ENCODE measurements at regions of chr4 and their contacts with region 1.

Region 1: DNA sequence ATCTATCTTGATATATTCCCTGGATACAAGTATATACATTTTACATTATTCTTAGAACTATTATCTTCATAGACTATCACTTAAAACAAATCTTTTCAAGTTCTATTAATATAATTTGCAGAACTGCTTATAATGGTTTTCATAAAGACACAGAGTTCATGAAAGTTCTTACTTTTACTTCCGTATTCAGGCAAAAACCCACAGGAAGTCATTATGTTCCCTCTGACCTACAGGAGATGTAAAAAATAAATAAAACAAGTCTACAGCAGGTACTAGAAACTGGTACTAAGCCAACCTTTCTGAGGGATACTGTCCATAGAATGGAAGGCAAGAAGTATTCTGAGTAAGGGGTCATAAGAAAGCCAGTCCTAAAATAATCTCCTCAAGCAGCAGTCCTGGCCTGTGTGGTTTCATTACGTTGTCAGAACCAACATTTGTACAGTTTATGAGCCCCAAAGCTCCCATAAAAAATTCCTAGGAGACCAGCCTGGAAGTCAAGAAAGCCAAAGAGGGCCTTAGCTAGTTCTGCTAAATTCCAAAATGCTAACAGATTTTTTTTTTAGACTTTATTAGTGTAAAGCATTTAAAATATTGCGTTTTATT is 68.6 kb downstream of the CAMK2D start:
- DNase-seq: no peak
- ATAC-seq: peak; percentile 85
- H3K4me3 Mint-ChIP-seq: peak overlapping the region; percentile 56
- H3K27ac Mint-ChIP-seq: peak overlapping the region; percentile 79
- H3K4me1 Mint-ChIP-seq: peaks cover 42% of the 10 kb centered on the region
- H3K27me3 Mint-ChIP-seq: no peaks in the 10 kb centered on the region
- CTCF ChIP-seq: no peak

Region 2: DNA sequence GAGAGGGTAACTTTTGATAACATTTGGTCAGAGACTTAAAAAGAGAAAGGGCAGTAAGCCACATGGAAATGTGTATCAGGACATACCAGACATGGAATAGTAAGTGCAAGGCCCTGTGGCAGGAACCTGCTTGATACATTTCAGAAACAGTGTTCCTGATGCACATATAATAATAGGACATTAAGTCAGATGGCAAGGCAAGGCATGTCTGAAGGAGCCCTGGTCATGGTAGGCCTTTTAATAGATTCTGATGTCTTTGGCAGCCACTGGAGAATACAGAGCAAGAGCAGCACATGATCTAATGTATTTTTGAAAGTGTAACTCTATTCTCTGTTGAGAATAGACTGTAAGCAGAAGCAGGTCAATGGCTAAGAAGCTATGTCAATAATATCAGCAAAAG is 211.1 kb before region 1 on chr4:
- CTCF ChIA-PET with region 1: no interaction called
- POLR2A ChIA-PET with region 1: no interaction called
- intact Hi-C with region 1: no loop called
- DNase-seq: no peak
- ATAC-seq: no peak
- H3K4me3 Mint-ChIP-seq: no peak overlapping the region
- H3K27ac Mint-ChIP-seq: peak overlapping the region; percentile 9
- H3K4me1 Mint-ChIP-seq: peaks cover 1% of the 10 kb centered on the region
- H3K27me3 Mint-ChIP-seq: no peaks in the 10 kb centered on the region
- CTCF ChIP-seq: no peak

Region 3: DNA sequence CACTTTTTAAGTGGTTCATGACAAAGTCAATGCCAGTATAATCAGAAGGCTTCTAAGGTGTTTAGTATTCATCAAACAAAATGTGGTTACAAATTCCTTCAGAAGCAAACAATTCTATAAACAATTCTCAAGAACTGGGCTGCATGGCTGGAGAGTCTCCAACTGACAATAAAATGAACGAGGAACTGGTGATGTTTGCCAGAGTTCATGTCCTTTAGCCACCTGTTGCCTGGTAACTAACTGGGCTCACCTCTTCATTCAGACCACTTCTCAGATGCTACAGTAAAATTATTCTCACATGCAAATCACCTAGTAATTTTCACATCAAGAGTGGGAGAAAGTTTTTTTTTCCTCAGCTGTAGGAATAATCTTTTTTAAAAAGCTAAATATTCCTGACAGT is 15.3 kb after region 1 on chr4:
- CTCF ChIA-PET with region 1: interaction called, 3 read pairs
- POLR2A ChIA-PET with region 1: interaction called, 5 read pairs
- intact Hi-C with region 1: loop called (anchors 1 kb)
- DNase-seq: no peak
- ATAC-seq: peak; percentile 45
- H3K4me3 Mint-ChIP-seq: no peak overlapping the region
- H3K27ac Mint-ChIP-seq: peak overlapping the region; percentile 56
- H3K4me1 Mint-ChIP-seq: peaks cover 47% of the 10 kb centered on the region
- H3K27me3 Mint-ChIP-seq: no peaks in the 10 kb centered on the region
- CTCF ChIP-seq: no peak

Region 4: GRCh38 chr4:113725963-113726362 is 33.1 kb after region 1 on chr4:
- CTCF ChIA-PET with region 1: no interaction called
- POLR2A ChIA-PET with region 1: interaction called, 3 read pairs
- intact Hi-C with region 1: loop called (anchors 5 kb)
- DNase-seq: no peak
- ATAC-seq: no peak
- H3K4me3 Mint-ChIP-seq: no peak overlapping the region
- H3K27ac Mint-ChIP-seq: peak overlapping the region; percentile 12
- H3K4me1 Mint-ChIP-seq: peaks cover 69% of the 10 kb centered on the region
- H3K27me3 Mint-ChIP-seq: no peaks in the 10 kb centered on the region
- CTCF ChIP-seq: no peak

Region 5: GRCh38 chr4:113921089-113921794 is 228.3 kb after region 1 on chr4:
- CTCF ChIA-PET with region 1: no interaction called
- POLR2A ChIA-PET with region 1: no interaction called
- intact Hi-C with region 1: no loop called
- DNase-seq: no peak
- ATAC-seq: no peak
- H3K4me3 Mint-ChIP-seq: no peak overlapping the region
- H3K27ac Mint-ChIP-seq: no peak overlapping the region
- H3K4me1 Mint-ChIP-seq: no peaks in the 10 kb centered on the region
- H3K27me3 Mint-ChIP-seq: peaks cover 3% of the 10 kb centered on the region
- CTCF ChIP-seq: no peak

Measured in activated B cell treated with CpG ODN at 0.5 μM for 24 hours (primary cell).